AG04449 (cell line): ENCODE measurements at regions of chr9 and their contacts with region 1.

Region 1: GRCh38 chr9:121233906-121234901 is 32.5 kb upstream of the RAB14 start:
- DNase-seq: no peak
- H3K4me3 ChIP-seq: no peak overlapping the region
- CTCF ChIP-seq: no peak

Region 2: DNA sequence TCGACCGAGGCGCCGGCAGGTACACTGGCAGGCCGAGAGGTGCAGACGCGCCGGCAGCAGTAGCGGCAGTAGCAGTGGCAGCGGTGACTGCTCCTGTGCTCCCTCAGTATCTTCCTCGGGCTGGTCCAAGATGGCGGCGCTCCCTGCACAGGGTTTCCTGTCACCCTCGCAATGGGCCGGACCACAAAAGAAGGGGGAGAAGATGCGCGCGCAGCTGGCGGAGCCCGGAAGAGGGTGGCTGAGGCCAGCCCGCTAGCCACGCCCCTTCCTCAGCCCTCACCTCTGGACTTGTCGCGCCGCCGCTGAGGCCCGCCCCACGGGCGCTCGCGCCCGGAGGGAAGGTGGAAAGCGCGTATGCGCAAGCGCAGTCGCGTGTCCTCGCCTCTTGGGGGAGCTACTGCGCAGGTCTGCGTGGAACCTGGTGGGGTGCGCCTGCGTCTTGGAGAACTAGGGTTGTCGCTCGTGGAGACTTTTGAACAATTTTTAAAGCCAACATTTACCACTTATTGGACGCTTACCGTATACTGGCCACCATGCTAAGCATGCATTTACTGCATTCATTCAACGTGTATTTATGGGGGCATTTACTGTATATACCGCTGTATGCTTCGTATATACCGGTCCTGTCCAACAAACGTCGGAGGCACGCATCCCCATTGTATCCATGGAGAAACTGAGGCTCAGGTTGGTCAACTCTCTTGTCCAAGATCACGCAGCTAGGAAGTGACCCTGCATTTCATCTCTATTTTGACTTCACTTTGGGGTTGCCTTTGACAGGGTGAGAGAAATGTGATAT is 32.3 kb before region 1 on chr9 and contains the start of gene RAB14:
- CTCF ChIA-PET with region 1: no interaction called
- POLR2A ChIA-PET with region 1: no interaction called
- DNase-seq: peak; percentile 67
- H3K4me3 ChIP-seq: peak within 1 kb of the TSS; percentile 82
- CTCF ChIP-seq: peak; percentile 70

Region 3: DNA sequence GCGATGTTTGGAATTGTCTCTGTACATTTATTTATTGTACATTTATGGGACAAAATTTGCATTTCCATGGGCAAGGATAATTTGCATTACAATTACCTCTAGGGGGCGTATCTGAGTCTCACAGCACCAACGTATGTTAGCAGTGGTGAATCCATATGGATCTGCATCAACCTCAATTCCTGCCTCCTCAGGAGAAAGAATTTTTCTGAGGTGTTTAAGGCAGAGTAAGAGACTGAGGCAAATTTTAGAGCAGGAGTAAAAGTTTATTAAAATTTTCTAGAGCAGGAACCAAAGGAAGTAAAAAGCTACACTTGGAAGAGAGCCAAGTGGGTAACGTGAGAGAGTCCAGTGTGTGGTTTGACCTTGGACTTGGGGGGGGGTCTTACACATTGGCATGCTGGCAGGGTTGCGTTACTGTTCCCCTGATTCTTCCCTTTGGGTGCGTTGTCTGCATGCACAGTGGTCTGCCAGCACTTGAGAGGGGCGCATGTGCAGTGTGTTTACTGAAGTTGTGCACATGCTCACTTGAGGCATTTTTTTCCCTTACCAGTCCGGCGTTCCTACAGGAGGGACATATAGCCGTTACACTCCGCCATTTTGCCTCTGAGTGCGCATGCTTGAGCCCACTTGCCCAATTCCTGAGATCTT is 11.6 kb before region 1 on chr9:
- CTCF ChIA-PET with region 1: interaction called, 50 read pairs
- POLR2A ChIA-PET with region 1: no interaction called
- DNase-seq: no peak
- H3K4me3 ChIP-seq: no peak overlapping the region
- CTCF ChIP-seq: peak; percentile 58